Activated naive CD8-positive, alpha-beta T cell treated with anti-CD3 and anti-CD28 coated beads, Interleukin-2, amount 10 ng/mL, durations not matched to agents 7 days and 5 days (primary cell): ENCODE measurements at regions of chr10 and their contacts with region 1.

Region 1: DNA sequence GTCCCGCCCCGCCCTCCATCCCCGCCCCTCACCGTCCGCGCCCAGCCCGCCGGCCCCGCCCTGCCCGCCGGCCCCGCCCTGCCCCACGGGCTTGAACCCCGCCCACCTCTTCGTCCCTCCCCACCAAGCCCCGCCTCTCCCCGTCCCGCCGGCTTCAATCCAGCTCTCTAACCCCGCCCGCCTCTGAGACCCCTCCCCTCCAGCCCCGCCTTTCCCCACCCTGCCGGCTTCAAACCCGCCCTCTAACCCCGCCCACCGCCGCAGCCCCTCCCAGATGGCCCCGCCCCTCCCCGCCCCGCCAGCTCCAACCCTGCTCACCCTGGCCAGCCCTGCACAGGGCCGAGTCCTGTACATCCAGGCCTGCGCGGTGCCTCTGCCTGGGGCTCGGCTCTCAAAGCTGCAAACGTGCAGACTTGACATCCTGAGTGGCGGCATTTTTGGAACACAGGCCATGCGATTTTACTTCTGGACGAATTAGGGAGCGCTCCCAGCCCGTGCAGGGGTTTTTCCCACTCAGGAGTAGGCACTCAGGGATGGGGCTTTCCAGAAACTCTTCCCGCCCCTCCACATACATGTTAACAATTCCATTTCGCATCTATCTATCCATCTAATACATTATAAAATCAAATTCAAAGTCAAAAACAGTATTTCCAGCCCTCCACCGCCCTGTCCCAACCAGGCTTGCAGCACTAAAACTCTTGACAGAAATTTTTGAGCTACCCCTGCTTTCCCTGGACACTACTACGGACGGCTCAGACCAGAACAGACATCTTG is 475 bp upstream of the NMT2 start:
- DNase-seq: peak; percentile 91
- ATAC-seq: peak; percentile 61
- H3K4me3 Mint-ChIP-seq: peak overlapping the region; percentile 76
- H3K27ac Mint-ChIP-seq: peak overlapping the region; percentile 84
- H3K4me1 Mint-ChIP-seq: peaks cover 42% of the 10 kb centered on the region
- H3K27me3 Mint-ChIP-seq: no peaks in the 10 kb centered on the region

Region 2: DNA sequence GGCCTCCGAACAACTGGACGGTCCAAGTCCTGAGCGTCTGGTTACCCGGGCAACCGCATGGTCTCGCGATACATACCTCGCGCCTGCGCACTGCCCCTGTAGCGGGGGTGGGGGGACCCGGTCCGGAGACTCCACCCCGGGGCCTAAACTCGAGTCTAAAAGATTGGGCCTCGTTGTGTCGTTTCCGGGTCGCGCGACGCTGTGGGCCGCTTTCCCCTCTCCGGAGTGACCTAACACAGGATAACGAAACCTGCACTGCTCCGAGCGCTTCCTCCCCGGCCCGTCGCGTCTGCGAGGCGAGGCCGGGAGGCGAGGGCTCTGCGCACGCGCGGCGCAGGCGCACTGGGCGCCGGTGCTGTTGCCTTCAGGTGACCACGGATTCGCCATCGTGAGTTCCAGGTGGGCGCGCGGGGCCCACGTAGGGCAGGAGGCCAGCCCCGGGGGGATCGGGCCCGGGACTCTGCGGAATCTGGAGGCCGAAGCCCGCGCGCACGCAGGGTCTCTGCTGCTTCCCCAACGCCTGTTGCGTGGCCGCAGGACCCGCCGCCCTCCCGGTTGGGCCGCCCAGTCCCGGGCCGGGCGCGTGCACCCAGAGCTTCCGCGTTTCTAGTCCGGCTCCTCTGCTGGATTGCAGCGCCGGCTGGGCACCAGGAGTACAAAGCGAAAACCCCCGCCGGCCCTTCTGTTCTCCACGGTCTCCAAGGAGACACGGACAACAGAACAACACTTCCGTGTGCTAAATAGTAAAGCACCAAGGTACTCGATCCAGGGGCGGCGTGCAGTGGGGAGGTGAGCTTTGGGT is 71.8 kb before region 1 on chr10 and contains the start of gene RPP38:
- POLR2A ChIA-PET with region 1: interaction called, 11 read pairs
- DNase-seq: peak; percentile 97
- ATAC-seq: peak; percentile 92
- H3K4me3 Mint-ChIP-seq: peak within 1 kb of the TSS; percentile 97
- H3K27ac Mint-ChIP-seq: peak within 1 kb of the TSS; percentile 97
- H3K4me1 Mint-ChIP-seq: peaks cover 20% of the 10 kb centered on the region
- H3K27me3 Mint-ChIP-seq: no peaks in the 10 kb centered on the region
- total RNA-seq, gene RPP38: 14.6 to 17.6 TPM

Region 3: DNA sequence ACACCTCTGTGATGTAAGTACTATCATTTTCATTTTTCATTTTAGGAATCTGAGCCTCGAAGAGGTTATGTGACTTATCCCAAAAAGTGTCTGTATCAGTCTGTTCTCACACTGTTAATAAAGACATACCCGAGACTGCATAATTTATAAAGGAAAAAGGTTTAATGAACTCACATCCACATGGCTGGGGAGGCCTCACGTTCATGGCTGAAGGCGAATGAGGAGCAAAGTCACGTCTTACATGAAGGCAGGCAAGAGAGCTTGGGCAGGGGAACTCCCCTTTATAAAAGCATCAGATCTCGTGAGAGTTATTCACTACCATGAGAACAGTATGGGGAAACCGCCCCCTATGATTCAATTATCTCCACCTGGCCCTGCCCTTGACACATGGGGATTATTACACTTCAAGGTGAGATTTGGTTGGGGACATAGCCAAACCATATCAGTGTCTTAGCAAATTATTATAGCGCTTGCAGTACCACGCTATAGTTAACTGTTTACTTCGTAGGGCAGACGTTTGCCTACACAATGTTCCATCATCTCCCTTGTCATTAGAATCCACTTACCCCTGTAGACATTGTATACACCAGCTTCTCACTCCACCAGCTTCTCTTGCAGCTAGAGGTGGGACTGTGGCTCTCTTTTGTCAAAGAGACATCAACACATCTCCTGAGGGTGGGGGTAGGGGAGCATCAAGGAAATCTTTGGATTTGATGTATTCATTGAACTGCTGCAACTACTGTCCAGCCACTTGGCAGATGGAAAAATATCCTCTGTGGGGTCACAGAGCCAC is 14.9 kb after region 1 on chr10:
- POLR2A ChIA-PET with region 1: interaction called, 18 read pairs
- DNase-seq: no peak
- ATAC-seq: no peak
- H3K4me3 Mint-ChIP-seq: no peak overlapping the region
- H3K27ac Mint-ChIP-seq: no peak overlapping the region
- H3K4me1 Mint-ChIP-seq: peaks cover 21% of the 10 kb centered on the region
- H3K27me3 Mint-ChIP-seq: peaks cover 3% of the 10 kb centered on the region

Region 4: GRCh38 chr10:15189133-15189885 is 20.3 kb after region 1 on chr10:
- POLR2A ChIA-PET with region 1: interaction called, 18 read pairs
- DNase-seq: no peak
- ATAC-seq: no peak
- H3K4me3 Mint-ChIP-seq: no peak overlapping the region
- H3K27ac Mint-ChIP-seq: peak overlapping the region; percentile 77
- H3K4me1 Mint-ChIP-seq: peaks cover 25% of the 10 kb centered on the region
- H3K27me3 Mint-ChIP-seq: no peaks in the 10 kb centered on the region

Region 5: GRCh38 chr10:15196021-15196834 is 27.3 kb after region 1 on chr10:
- POLR2A ChIA-PET with region 1: interaction called, 12 read pairs
- DNase-seq: no peak
- ATAC-seq: no peak
- H3K4me3 Mint-ChIP-seq: peak overlapping the region; percentile 35
- H3K27ac Mint-ChIP-seq: peak overlapping the region; percentile 23
- H3K4me1 Mint-ChIP-seq: peaks cover 17% of the 10 kb centered on the region
- H3K27me3 Mint-ChIP-seq: no peaks in the 10 kb centered on the region

Region 6: DNA sequence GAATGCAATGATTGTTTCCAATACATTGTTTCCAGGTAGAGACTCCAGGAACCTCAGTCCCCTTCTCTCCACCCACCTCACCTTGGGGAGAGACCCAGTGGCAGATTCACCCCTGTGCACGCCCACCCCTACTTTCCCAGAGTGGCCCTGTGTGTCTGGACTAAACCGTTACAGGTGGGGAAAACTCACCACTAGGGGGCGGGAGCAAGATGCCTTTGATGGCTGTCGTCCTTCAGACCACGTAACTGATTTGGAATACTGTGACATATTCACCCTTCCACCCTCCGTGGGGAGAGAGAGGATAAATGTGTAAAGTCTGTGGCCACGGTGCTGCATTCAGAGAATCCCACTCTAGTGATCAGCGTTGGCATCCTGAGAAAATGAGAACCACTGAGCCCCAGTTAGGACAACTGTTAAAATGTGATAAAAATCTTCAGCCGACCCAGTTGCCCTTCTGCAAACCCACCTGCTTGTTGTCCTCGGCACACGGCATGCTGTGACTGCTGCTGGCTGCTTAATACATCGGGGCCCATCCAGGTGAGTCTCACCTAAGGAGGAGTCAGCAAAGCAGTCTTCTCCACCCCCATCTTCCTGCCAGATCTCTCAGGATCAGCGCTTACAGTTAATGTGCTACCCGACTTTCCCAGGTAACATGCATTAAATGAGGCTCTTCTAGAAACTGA is 41.0 kb after region 1 on chr10:
- POLR2A ChIA-PET with region 1: interaction called, 31 read pairs
- DNase-seq: peak; percentile 71
- ATAC-seq: peak; percentile 69
- H3K4me3 Mint-ChIP-seq: peak overlapping the region; percentile 32
- H3K27ac Mint-ChIP-seq: peak overlapping the region; percentile 43
- H3K4me1 Mint-ChIP-seq: peaks cover 42% of the 10 kb centered on the region
- H3K27me3 Mint-ChIP-seq: no peaks in the 10 kb centered on the region